ENCODE measurements at regions of chr13 and their contacts with region 1.

Region 1: GRCh38 chr13:27270594-27271520 is at the start of gene RASL11A:
- DNase-seq: peak; percentile 41 to 80
- ATAC-seq: peak; percentile 91 to 95
- H3K4me3 ChIP-seq: peak within 1 kb of the TSS; percentile 52
- H3K27ac ChIP-seq: peak within 1 kb of the TSS; percentile 64 to 91
- H3K4me1 ChIP-seq: peaks cover 17% of the 10 kb centered on the region
- CTCF ChIP-seq: peak; percentile 73
- EP300 ChIP-seq: no peak
- POLR2A ChIP-seq: peak; percentile 84
- RAD21 ChIP-seq: peak in 1 of 2 experiments; percentile 27; a peak in 1 of 5 replicates
- polyA plus RNA-seq, gene RASL11A: 2.1 TPM in 2 replicates

Region 2: DNA sequence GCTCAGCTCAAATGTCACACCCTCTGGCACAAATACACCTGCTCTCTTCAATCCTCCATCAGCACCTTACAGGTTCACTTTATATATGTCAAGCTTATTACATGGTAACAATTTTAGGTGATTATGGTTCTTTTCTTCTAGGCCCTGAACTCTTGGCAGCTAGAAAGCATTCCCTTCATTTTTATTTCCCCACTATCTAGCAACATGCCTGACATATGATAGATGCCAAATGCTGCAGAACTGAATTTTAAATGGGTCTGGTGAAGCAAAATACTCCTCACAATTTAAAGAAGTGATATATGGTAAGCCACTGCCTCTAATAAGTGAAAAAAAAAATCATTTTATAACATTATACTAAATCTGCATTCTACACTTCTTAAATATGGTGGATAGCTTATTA is 194.4 kb before region 1 on chr13:
- CTCF ChIA-PET with region 1: no interaction called
- POLR2A ChIA-PET with region 1: no interaction called
- DNase-seq: no peak
- ATAC-seq: no peak
- H3K4me3 ChIP-seq: no peak overlapping the region
- H3K27ac ChIP-seq: no peak overlapping the region
- H3K4me1 ChIP-seq: no peaks in the 10 kb centered on the region
- CTCF ChIP-seq: no peak
- EP300 ChIP-seq: no peak
- POLR2A ChIP-seq: no peak
- RAD21 ChIP-seq: no peak

Region 3: DNA sequence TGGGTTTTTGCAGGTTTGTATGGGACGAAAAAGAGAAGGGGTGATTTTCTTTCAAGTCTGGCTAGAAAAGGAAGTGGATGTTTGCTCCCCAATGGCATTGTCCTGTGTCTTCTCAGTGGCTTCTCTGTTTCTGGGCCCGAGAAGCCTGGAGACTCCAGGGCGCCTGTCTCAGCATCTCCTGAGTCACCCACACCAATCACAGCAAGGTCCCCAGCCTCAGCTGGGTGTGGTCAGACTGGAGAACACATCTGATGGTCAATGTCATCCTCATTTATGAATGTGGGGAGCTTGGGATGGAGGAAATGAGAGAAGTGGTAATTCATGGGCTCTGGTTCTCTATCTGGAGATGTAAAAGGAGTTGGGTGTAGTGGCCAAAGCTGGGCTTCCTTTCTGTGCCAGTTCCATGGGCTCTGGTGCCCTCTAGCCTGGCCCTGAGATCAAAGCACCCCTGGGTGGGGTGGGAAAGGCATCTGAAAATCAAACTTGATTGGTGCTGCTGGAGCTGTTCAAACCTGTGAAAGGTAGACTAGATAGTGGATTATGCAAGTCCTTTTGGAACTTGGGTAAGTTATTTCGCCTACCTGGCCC is 13.1 kb after region 1 on chr13:
- CTCF ChIA-PET with region 1: interaction called, 16 read pairs
- POLR2A ChIA-PET with region 1: interaction called, 4 read pairs
- DNase-seq: peak; percentile 7 to 46
- ATAC-seq: peak; percentile 81 to 90
- H3K4me3 ChIP-seq: no peak overlapping the region
- H3K27ac ChIP-seq: no peak overlapping the region
- H3K4me1 ChIP-seq: no peaks in the 10 kb centered on the region
- CTCF ChIP-seq: peak; percentile 43
- EP300 ChIP-seq: no peak
- POLR2A ChIP-seq: no peak
- RAD21 ChIP-seq: peak; percentile 67 to 70

Measured in A549 (cell line).